ENCODE measurements at regions of chr7 and their contacts with region 1.

Region 1: GRCh38 chr7:93231799-93232672 is at the start of gene VPS50:
- DNase-seq: peak; percentile 82 to 97 (median 91)
- ATAC-seq: peak; percentile 95
- H3K4me3 ChIP-seq: peak within 1 kb of the TSS; percentile 88 to 92
- H3K4me3 Mint-ChIP-seq: peak within 1 kb of the TSS; percentile 96
- H3K27ac ChIP-seq: peak within 1 kb of the TSS; percentile 89 to 90
- H3K27ac Mint-ChIP-seq: peak within 1 kb of the TSS; percentile 99
- H3K4me1 ChIP-seq: peaks cover 25% of the 10 kb centered on the region
- H3K4me1 Mint-ChIP-seq: peaks cover 19% of the 10 kb centered on the region
- H3K27me3 ChIP-seq: no peaks in the 10 kb centered on the region
- H3K27me3 Mint-ChIP-seq: no peaks in the 10 kb centered on the region
- CTCF ChIP-seq: no peak
- total RNA-seq, gene VPS50: 17.1 to 20.2 TPM

Region 2: GRCh38 chr7:91940572-91941341 is 1291.3 kb before region 1 on chr7 and contains the start of gene AKAP9:
- CTCF ChIA-PET with region 1: no interaction called
- POLR2A ChIA-PET with region 1: no interaction called
- intact Hi-C with region 1: loop called (anchors 2 to 10 kb)
- DNase-seq: peak; percentile 71 to 93 (median 89)
- ATAC-seq: peak; percentile 84
- H3K4me3 ChIP-seq: peak within 1 kb of the TSS; percentile 78 to 92
- H3K4me3 Mint-ChIP-seq: peak within 1 kb of the TSS; percentile 93
- H3K27ac ChIP-seq: peak within 1 kb of the TSS; percentile 91 to 93
- H3K27ac Mint-ChIP-seq: peak within 1 kb of the TSS; percentile 96
- H3K4me1 ChIP-seq: peaks cover 21% of the 10 kb centered on the region
- H3K4me1 Mint-ChIP-seq: peaks cover 45% of the 10 kb centered on the region
- H3K27me3 ChIP-seq: no peaks in the 10 kb centered on the region
- H3K27me3 Mint-ChIP-seq: no peaks in the 10 kb centered on the region
- CTCF ChIP-seq: no peak
- total RNA-seq, gene AKAP9: 61.2 to 61.3 TPM

Region 3: GRCh38 chr7:92447345-92448204 is 784.5 kb before region 1 on chr7 and contains the start of gene GATAD1:
- CTCF ChIA-PET with region 1: no interaction called
- POLR2A ChIA-PET with region 1: interaction called, 3 read pairs
- intact Hi-C with region 1: loop called in 1 of 2 experiments (anchors 5 kb)
- DNase-seq: peak; percentile 55 to 91 (median 79)
- ATAC-seq: peak; percentile 78
- H3K4me3 ChIP-seq: peak within 1 kb of the TSS; percentile 73 to 79
- H3K4me3 Mint-ChIP-seq: peak within 1 kb of the TSS; percentile 91
- H3K27ac ChIP-seq: peak within 1 kb of the TSS; percentile 92 to 97
- H3K27ac Mint-ChIP-seq: peak within 1 kb of the TSS; percentile 99
- H3K4me1 ChIP-seq: peaks cover 17% of the 10 kb centered on the region
- H3K4me1 Mint-ChIP-seq: peaks cover 16% of the 10 kb centered on the region
- H3K27me3 ChIP-seq: no peaks in the 10 kb centered on the region
- H3K27me3 Mint-ChIP-seq: no peaks in the 10 kb centered on the region
- CTCF ChIP-seq: peak; percentile 90
- total RNA-seq, gene GATAD1: 10.3 to 10.5 TPM

Region 4: GRCh38 chr7:92590711-92591310 is 641.2 kb before region 1 on chr7:
- CTCF ChIA-PET with region 1: no interaction called
- POLR2A ChIA-PET with region 1: no interaction called
- intact Hi-C with region 1: loop called (anchors 1 to 2 kb)
- DNase-seq: peak in 1 of 9 experiments; percentile 11
- ATAC-seq: no peak
- H3K4me3 ChIP-seq: peak overlapping the region; percentile 71 to 74
- H3K4me3 Mint-ChIP-seq: peak overlapping the region; percentile 96
- H3K27ac ChIP-seq: no peak overlapping the region
- H3K27ac Mint-ChIP-seq: no peak overlapping the region
- H3K4me1 ChIP-seq: peaks cover 32% of the 10 kb centered on the region
- H3K4me1 Mint-ChIP-seq: peaks cover 46% of the 10 kb centered on the region
- H3K27me3 ChIP-seq: no peaks in the 10 kb centered on the region
- H3K27me3 Mint-ChIP-seq: no peaks in the 10 kb centered on the region
- CTCF ChIP-seq: no peak

Region 5: GRCh38 chr7:92833024-92833765 is 398.8 kb before region 1 on chr7:
- CTCF ChIA-PET with region 1: interaction called, 3 read pairs
- POLR2A ChIA-PET with region 1: no interaction called
- intact Hi-C with region 1: loop called (anchors 1 to 5 kb)
- DNase-seq: peak; percentile 78 to 93 (median 88)
- ATAC-seq: peak; percentile 71
- H3K4me3 ChIP-seq: peak overlapping the region; percentile 85 to 96
- H3K4me3 Mint-ChIP-seq: peak overlapping the region; percentile 98
- H3K27ac ChIP-seq: peak overlapping the region; percentile 46 to 68
- H3K27ac Mint-ChIP-seq: peak overlapping the region; percentile 92
- H3K4me1 ChIP-seq: peaks cover 39% of the 10 kb centered on the region
- H3K4me1 Mint-ChIP-seq: peaks cover 60% of the 10 kb centered on the region
- H3K27me3 ChIP-seq: peaks cover 0 to 3% of the 10 kb centered on the region in 2 experiments
- H3K27me3 Mint-ChIP-seq: peaks cover 4% of the 10 kb centered on the region
- CTCF ChIP-seq: peak; percentile 81

Region 6: GRCh38 chr7:93147363-93147762 is 84.7 kb before region 1 on chr7:
- CTCF ChIA-PET with region 1: interaction called, 3 read pairs
- POLR2A ChIA-PET with region 1: no interaction called
- intact Hi-C with region 1: loop called in 1 of 2 experiments (anchors 1 kb)
- DNase-seq: peak in 8 of 9 experiments; percentile 4 to 72 (median 44)
- ATAC-seq: peak; percentile 82
- H3K4me3 ChIP-seq: peak overlapping the region; percentile 61 to 68
- H3K4me3 Mint-ChIP-seq: peak overlapping the region; percentile 94
- H3K27ac ChIP-seq: peak overlapping the region; percentile 44 to 79
- H3K27ac Mint-ChIP-seq: peak overlapping the region; percentile 90
- H3K4me1 ChIP-seq: peaks cover 23% of the 10 kb centered on the region
- H3K4me1 Mint-ChIP-seq: peaks cover 33% of the 10 kb centered on the region
- H3K27me3 ChIP-seq: no peaks in the 10 kb centered on the region
- H3K27me3 Mint-ChIP-seq: no peaks in the 10 kb centered on the region
- CTCF ChIP-seq: no peak

Region 7: DNA sequence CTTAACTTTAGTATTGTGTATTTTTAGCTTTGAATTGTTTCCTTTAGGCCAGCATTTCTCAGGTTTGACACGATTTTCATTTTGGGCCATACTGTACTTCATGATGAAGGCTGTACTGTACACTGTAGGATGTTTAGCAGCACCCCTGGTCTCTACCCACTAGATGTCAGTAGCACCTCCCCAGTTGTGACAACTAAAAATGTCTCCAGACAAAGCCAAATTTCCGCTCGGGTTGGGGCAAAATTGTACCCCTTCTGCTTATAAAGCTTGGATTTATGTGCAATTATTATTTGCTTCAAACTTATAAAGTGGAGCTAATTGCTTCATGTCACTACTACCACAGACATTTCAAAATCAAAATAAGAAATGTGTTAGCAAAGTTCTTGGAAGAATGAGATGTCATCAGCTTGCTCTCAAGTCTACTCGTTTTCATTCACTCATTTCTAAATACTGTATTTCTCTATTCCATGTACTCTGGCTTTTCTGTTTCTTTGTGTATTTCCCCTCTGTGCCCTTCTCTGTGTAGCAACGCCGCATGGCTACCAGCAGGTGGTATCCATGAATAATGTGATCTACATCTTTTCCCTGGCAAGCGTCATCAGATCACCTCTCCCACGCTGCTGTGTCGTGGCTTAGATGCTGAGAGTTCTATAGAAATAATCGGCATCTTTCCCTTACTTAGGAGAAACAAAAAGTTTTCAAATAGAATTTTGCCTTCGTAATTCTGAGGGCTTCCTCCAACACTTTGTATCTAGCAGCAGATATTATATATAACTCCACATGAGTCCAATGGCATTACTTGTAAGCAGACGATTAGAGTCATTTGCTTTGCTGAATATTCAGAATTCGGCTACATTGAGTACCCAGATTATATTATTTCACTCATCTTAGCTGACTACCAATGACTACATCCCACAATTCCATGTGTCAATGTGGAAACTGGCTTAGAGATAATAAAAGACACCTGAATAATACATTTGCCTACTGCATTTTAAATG is 390.3 kb after region 1 on chr7:
- CTCF ChIA-PET with region 1: no interaction called
- POLR2A ChIA-PET with region 1: no interaction called
- intact Hi-C with region 1: no loop called
- DNase-seq: no peak
- ATAC-seq: no peak
- H3K4me3 ChIP-seq: no peak overlapping the region
- H3K4me3 Mint-ChIP-seq: no peak overlapping the region
- H3K27ac ChIP-seq: no peak overlapping the region
- H3K27ac Mint-ChIP-seq: no peak overlapping the region
- H3K4me1 ChIP-seq: no peaks in the 10 kb centered on the region
- H3K4me1 Mint-ChIP-seq: no peaks in the 10 kb centered on the region
- H3K27me3 ChIP-seq: no peaks in the 10 kb centered on the region
- H3K27me3 Mint-ChIP-seq: no peaks in the 10 kb centered on the region
- CTCF ChIP-seq: no peak

Region 8: DNA sequence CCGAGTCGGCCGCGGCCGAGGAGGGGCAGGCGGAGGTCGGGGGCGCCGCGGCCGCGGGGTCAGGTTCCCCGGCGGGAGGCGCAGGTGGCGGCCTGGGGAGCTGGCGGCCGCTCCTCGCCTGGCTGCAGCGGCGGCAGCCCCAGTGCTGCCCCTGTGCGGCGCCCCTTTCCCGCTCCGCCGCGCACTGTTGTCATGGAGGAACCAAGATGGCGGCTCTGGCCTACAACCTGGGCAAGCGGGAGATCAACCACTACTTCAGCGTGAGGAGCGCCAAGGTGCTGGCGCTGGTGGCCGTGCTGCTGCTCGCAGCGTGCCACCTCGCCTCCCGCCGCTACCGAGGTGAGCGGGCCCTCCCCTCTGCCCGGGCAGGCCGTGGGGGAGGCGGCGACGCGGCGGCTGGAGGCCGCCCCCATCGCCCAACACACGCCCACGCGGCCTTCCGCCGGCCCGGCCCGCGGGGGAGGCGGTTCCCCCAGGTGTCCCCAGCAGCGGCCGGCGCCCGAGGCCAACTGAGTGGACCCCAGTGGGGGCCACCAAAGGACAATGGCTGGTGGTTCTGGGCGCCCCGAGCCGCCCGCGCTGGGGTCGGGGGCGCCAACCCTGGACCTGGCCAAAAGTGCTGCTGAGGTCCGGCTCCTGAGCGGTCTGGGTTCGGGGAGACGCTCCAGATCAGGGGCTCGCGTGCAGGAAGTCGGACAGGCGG is 1278.0 kb after region 1 on chr7:
- CTCF ChIA-PET with region 1: no interaction called
- POLR2A ChIA-PET with region 1: no interaction called
- intact Hi-C with region 1: loop called (anchors 5 kb)
- DNase-seq: peak; percentile 33 to 84 (median 68)
- ATAC-seq: peak; percentile 75
- H3K4me3 ChIP-seq: peak overlapping the region; percentile 78 to 79
- H3K4me3 Mint-ChIP-seq: peak overlapping the region; percentile 87
- H3K27ac ChIP-seq: peak overlapping the region; percentile 75 to 89
- H3K27ac Mint-ChIP-seq: peak overlapping the region; percentile 94
- H3K4me1 ChIP-seq: peaks cover 37% of the 10 kb centered on the region
- H3K4me1 Mint-ChIP-seq: peaks cover 47% of the 10 kb centered on the region
- H3K27me3 ChIP-seq: no peaks in the 10 kb centered on the region
- H3K27me3 Mint-ChIP-seq: no peaks in the 10 kb centered on the region
- CTCF ChIP-seq: no peak